ENCODE measurements at regions of chr12 and their contacts with region 1.

Region 1: DNA sequence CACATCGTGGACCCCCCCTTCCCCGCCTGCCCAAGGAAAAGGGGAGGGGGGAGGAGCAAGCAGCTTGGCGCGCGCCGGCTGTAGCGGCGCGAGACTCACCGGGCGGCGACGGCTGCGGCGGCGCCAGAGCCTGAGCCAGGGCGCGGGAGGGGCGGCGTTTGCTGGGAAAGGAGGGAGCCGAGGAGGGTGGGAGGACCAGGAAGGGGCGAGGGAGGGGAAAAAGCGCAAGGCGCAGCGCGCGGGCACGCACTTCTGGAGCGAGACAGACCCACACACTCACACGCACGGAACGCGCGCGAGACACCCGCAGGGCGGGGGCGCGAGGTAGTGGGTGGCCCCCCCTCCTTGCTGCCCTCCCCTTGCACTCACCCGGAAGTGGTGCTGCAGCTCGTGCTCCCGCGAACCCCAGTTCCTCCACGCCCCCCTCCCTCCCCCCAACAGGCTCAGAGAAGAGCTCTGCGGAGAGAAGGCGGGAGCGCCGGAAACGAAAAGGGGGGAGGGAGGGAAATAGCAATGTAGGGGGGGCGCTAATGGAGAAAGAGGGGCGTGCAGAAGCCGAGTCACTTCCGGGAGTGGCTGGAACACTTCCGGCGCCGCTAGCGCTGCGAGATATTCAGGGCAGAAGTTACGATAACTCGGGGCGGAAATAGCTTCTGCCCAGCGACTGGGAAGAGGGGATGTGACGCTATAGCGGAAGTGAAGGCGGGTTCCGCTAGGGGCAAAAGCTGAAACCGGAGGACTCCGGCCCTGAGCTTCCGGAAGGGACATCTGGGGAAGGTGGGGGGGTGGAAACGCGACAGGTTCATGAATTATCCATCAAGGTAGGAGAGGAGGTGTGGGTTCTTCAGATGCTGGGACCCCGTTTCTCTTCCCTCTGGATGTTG is at the start of gene ZNF384:
- DNase-seq: peak; percentile 94 to 99
- ATAC-seq: peak; percentile 91 to 97 (median 96)
- H3K4me3 ChIP-seq: peak within 1 kb of the TSS; percentile 65 to 98 (median 91)
- H3K27ac ChIP-seq: peak within 1 kb of the TSS; percentile 95 to 100 (median 98)
- H3K4me1 ChIP-seq: peaks cover 3 to 55% (median 40%) of the 10 kb centered on the region in 9 donors
- H3K27me3 ChIP-seq: peaks cover 0 to 1% (median 0%) of the 10 kb centered on the region in 7 donors
- CTCF ChIP-seq: peak in 5 of 9 donors; percentile 11 to 31 (median 22)
- total RNA-seq, gene ZNF384: 25.1 to 36.0 (median 29.0) TPM

Region 2: DNA sequence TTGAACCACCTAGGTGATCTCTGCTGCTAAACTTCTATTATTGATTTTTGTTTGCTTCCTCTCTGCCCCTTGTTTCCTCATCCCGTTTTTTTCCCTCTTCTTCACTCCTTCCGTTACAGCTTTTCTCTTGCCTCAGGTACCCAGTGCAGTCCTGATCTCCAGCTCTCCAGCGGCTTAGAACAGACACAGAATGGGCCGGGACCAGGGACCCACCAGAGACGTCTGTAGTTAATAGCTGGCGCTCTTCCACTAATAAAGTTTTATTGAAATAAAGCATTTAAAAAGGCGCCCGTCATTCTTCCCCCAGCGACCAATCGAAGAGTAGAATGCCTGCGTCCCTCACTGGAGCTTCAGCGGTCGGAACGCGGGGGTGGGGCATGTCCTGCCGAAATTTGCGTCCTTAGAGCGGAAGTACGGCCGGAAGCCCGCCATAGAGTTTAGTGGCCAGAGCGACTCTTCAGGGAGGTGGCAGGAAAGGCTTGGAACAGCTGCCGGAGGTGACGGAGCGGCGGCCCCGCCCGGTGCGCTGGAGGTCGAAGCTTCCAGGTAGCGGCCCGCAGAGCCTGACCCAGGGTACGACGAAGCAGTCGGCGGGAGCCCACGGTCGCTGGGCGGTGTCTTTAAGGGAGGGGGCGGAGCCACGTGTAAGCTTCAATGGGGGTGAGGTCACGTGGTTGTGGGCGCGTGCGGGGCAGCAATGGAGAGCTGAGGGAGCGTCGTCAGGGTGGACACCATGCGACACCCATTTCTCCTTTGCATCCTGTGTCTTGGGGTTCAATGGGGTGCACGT is 34.6 kb after region 1 on chr12 and contains the start of gene COPS7A:
- intact Hi-C with region 1: loop called in 5 of 10 experiments (anchors 1 to 5 kb)
- DNase-seq: peak; percentile 97 to 99
- ATAC-seq: peak; percentile 99 to 100 (median 99)
- H3K4me3 ChIP-seq: peak within 1 kb of the TSS; percentile 40 to 90 (median 64)
- H3K27ac ChIP-seq: peak within 1 kb of the TSS; percentile 81 to 95 (median 88)
- H3K4me1 ChIP-seq: peaks cover 0 to 20% (median 14%) of the 10 kb centered on the region in 9 donors
- H3K27me3 ChIP-seq: no peaks in the 10 kb centered on the region
- CTCF ChIP-seq: no peak
- total RNA-seq, gene COPS7A: 67.4 to 89.8 (median 77.9) TPM

Region 3: GRCh38 chr12:6764011-6764828 is 75.0 kb after region 1 on chr12:
- intact Hi-C with region 1: loop called in 1 of 10 experiments (anchors 5 kb)
- DNase-seq: peak; percentile 93 to 96
- ATAC-seq: peak; percentile 80 to 92 (median 88)
- H3K4me3 ChIP-seq: peak overlapping the region in 9 of 10 donors; percentile 13 to 81 (median 31)
- H3K27ac ChIP-seq: peak overlapping the region; percentile 87 to 99 (median 94)
- H3K4me1 ChIP-seq: peaks cover 7 to 52% (median 42%) of the 10 kb centered on the region in 9 donors
- H3K27me3 ChIP-seq: peaks cover 0 to 27% (median 0%) of the 10 kb centered on the region in 7 donors
- CTCF ChIP-seq: no peak

Region 4: DNA sequence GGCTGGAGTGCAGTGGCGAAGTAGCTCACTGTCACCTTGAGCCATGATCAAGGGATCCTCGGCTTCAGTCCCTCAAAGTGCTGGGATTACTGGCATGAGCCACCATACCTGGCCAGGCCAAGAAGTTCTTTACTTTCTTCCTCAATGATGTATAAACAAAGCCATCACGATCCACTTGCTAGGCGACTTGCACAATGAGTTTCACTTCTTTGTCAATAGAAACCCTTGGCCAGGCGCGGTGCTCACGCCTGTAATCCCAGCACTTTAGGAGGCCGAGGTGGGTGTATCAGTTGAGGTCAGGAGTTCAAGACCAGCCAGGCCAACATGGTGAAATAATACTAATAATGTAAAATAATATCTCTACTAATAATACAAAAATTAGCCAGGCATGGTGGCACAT is 198.2 kb after region 1 on chr12:
- intact Hi-C with region 1: no loop called
- DNase-seq: no peak
- ATAC-seq: no peak
- H3K4me3 ChIP-seq: no peak overlapping the region
- H3K27ac ChIP-seq: no peak overlapping the region
- H3K4me1 ChIP-seq: peaks cover 0 to 22% (median 11%) of the 10 kb centered on the region in 9 donors
- H3K27me3 ChIP-seq: no peaks in the 10 kb centered on the region
- CTCF ChIP-seq: no peak

Measured in heart right ventricle (tissue), 16 donors.